ENCODE measurements at regions of chr18 and their contacts with region 1.

Region 1: GRCh38 chr18:30376515-30376914 is 666.0 kb downstream of the DSC3 start:
- DNase-seq: no peak
- H3K4me3 Mint-ChIP-seq: no peak overlapping the region
- H3K27ac Mint-ChIP-seq: no peak overlapping the region
- H3K4me1 Mint-ChIP-seq: no peaks in the 10 kb centered on the region
- H3K27me3 Mint-ChIP-seq: no peaks in the 10 kb centered on the region

Region 2: GRCh38 chr18:30342675-30343074 is 33.8 kb before region 1 on chr18:
- CTCF ChIA-PET with region 1: no interaction called
- intact Hi-C with region 1: no loop called
- DNase-seq: no peak
- H3K4me3 Mint-ChIP-seq: no peak overlapping the region
- H3K27ac Mint-ChIP-seq: no peak overlapping the region
- H3K4me1 Mint-ChIP-seq: no peaks in the 10 kb centered on the region
- H3K27me3 Mint-ChIP-seq: no peaks in the 10 kb centered on the region

Region 3: GRCh38 chr18:30439174-30439573 is 62.7 kb after region 1 on chr18:
- CTCF ChIA-PET with region 1: no interaction called
- intact Hi-C with region 1: loop called (anchors 10 kb)
- DNase-seq: no peak
- H3K4me3 Mint-ChIP-seq: no peak overlapping the region
- H3K27ac Mint-ChIP-seq: no peak overlapping the region
- H3K4me1 Mint-ChIP-seq: no peaks in the 10 kb centered on the region
- H3K27me3 Mint-ChIP-seq: no peaks in the 10 kb centered on the region

Region 4: DNA sequence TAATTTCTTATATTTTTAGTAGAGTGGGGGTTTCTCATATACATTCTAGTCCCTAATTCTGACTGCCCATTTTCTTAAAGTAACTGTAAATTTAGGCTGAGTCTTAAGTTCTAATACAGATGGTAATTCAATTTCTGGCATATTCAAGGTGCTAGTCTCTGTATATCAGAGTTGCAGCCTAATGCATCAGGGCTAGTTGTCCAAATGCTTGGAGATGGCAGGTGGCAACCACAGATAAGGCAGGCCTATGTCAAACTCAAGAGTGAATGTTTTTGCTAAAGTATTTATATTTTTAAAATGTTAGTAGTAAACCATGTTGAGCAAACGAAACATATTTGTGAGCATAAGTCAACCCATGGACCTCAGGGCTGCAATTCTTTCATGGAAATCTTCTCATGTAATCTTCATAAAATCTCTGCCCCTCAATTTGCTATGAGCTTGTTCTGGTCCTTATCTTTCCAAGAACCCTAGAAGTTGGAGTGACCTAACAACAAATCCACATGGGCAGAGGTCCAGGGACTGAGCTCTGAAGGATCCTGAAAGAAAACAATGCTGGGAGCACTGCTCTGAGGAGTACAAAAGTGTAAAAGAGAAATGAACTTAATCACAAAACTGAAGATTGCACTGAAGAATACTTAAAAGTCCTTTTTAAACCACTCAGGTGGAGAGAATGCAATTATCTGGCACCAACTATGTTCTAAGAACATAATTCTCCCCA is 753.0 kb after region 1 on chr18:
- CTCF ChIA-PET with region 1: no interaction called
- intact Hi-C with region 1: no loop called
- DNase-seq: no peak
- H3K4me3 Mint-ChIP-seq: no peak overlapping the region
- H3K27ac Mint-ChIP-seq: no peak overlapping the region
- H3K4me1 Mint-ChIP-seq: no peaks in the 10 kb centered on the region
- H3K27me3 Mint-ChIP-seq: no peaks in the 10 kb centered on the region